ENCODE measurements at regions of chr20 and their contacts with region 1.

Region 1: DNA sequence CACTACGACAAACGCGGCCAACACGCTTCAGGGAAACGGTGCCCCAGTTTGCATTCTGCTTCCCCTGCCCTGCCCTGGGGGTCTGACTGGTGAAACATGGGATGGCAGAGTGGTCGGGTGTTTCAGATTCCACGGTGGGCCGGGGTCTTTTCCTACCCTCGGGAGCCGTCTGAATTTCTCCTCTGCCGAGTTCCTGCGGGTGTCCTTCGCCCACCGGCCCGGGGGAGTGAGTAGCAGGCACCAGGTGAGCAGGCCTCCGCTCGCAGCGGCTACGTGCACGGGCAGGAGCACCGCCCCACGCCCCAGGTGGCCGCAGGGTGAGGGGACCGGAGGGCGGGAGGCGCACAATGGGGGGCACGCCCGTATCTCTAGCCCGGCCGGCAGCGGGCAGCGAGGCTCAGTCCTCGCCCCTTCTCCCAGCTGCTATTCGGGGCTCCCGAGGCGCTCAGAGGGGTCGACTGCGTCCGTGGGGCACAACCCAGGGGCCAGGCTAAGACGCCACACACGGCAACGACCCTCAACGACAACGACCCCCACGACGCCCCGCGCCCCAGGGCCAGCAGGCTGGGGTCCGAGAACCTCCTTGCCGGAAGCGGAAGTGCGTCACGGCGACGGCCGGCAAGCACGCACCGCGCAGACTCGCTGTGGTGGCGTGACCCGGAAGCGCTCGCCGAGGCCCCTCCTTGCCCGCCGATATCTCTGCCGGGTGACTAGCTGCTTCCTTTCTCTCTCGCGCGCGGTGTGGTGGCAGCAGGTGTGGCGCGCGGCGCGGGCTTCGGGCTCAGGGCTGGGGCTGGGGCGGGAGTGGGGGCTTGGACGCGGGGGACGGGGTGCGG is at the start of gene RPS21:
- DNase-seq: peak; percentile 90
- H3K4me3 ChIP-seq: peak within 1 kb of the TSS; percentile 85 to 92
- H3K27ac ChIP-seq: peak within 1 kb of the TSS; percentile 85 to 86
- H3K4me1 ChIP-seq: peaks cover 10% of the 10 kb centered on the region
- H3K27me3 ChIP-seq: no peaks in the 10 kb centered on the region
- CTCF ChIP-seq: no peak
- POLR2A ChIP-seq: peak; percentile 68
- total RNA-seq, gene RPS21: 1,506 to 4,377 TPM

Region 2: GRCh38 chr20:62182613-62183425 is 203.8 kb before region 1 on chr20 and contains the start of gene MTG2:
- intact Hi-C with region 1: loop called (anchors 10 kb)
- DNase-seq: peak; percentile 92
- H3K4me3 ChIP-seq: peak within 1 kb of the TSS; percentile 74 to 79
- H3K27ac ChIP-seq: peak within 1 kb of the TSS; percentile 84 to 87
- H3K4me1 ChIP-seq: peaks cover 4% of the 10 kb centered on the region
- H3K27me3 ChIP-seq: no peaks in the 10 kb centered on the region
- CTCF ChIP-seq: peak in 1 of 4 experiments; percentile 35
- POLR2A ChIP-seq: peak; percentile 72
- total RNA-seq, gene MTG2: 40.0 to 53.0 TPM

Region 3: DNA sequence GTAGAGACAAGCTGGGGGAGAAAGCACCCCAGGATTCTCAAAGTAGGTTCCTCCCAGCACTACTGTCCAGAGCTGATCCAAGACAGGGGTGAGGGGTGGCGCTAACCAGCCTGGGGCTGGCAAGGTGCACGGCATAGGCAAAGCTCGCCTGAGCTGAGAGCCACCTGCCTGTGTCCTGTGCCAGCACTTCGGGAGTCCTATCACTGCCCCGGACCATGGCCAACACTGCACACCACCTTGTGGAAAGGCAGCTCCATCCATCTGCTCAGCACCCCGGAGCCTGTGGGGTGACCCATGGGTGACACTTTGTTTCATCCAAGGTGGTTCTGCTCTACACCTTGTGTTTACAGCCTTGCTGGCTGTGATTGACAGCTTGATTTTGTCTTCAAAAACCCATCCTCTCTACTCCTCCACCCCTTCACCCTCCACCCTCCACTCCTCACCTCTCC is 122.0 kb after region 1 on chr20:
- intact Hi-C with region 1: no loop called
- DNase-seq: no peak
- H3K4me3 ChIP-seq: no peak overlapping the region
- H3K27ac ChIP-seq: no peak overlapping the region
- H3K4me1 ChIP-seq: no peaks in the 10 kb centered on the region
- H3K27me3 ChIP-seq: no peaks in the 10 kb centered on the region
- CTCF ChIP-seq: no peak
- POLR2A ChIP-seq: no peak

Measured in prostate gland (tissue), 2 donors.